ENCODE measurements at regions of chr7 and their contacts with region 1.

Region 1: DNA sequence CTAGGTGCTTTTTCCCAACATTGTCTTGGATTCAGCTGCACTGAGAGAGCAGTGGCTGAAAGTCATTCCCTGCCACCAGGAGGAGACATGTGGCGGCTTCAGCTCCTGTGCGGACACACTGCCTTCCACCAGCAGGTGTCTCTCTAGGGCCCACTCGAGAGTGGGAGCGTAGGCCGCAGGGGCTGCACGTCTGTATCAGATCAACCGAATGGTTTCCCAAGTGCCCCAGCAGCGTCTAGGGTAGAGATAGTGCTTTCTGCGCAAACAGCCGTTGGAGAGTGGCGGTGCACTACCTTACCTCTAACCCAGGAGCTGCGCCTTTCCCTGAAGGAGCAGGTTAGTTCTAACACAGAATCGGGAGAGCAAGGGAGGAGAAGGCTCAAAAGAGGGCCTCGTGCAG is 31.7 kb downstream of the PAPOLB start:
- DNase-seq: peak; percentile 82 to 89 (median 86)
- H3K4me3 ChIP-seq: no peak overlapping the region
- H3K27ac ChIP-seq: no peak overlapping the region
- H3K4me1 ChIP-seq: peaks cover 0 to 3% (median 0%) of the 10 kb centered on the region in 4 experiments
- H3K27me3 ChIP-seq: no peaks in the 10 kb centered on the region

Region 2: GRCh38 chr7:4733936-4734528 is 96.1 kb before region 1 on chr7:
- CTCF ChIA-PET with region 1: no interaction called
- POLR2A ChIA-PET with region 1: no interaction called
- DNase-seq: peak in 2 of 3 donors; percentile 83 to 84
- H3K4me3 ChIP-seq: peak overlapping the region in 3 of 7 experiments; percentile 5 to 36 (median 28)
- H3K27ac ChIP-seq: no peak overlapping the region
- H3K4me1 ChIP-seq: peaks cover 0 to 43% (median 42%) of the 10 kb centered on the region in 4 experiments
- H3K27me3 ChIP-seq: no peaks in the 10 kb centered on the region

Region 3: DNA sequence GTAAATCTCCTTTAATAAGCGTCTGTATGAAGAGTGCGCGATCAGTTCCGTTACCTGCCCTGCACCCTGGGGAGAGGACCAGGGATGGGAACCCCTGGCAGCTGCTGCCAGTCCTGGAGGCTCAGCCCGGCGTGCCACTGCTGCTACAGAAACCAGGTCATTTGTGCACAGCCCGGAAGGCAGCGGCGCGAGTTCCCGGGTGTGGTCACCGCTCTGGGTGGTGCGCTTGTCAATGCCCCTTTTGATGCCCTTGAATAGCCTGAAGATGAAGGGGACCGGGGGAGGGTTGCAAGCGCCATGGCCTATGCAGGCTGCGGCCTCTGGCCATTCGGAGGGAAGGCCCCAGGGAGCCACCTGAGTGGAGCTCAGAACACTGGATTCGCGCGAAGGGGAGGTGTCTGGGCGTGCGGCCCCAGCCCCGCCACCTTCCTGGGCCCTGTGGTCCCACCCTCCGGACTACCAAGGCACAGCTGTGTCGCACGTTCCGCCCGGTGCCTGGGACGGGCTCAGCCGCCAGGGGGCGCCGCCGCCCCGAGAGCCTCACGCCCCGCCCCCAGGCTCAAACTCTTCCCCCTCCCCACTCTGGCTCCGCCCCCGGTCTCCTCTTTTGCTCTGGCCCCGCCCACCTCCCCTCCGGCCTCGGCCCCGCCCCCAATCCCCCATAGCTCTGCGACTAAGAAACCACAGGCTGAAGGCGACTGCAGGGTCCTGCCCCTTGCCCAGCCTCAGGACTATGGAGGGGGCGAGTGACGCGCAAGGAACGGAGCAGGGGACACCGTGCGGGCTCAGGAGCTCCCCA is 38.2 kb before region 1 on chr7:
- CTCF ChIA-PET with region 1: interaction called, 29 read pairs
- POLR2A ChIA-PET with region 1: no interaction called
- DNase-seq: peak; percentile 75 to 88 (median 84)
- H3K4me3 ChIP-seq: peak overlapping the region in 6 of 7 experiments; percentile 30 to 72 (median 66)
- H3K27ac ChIP-seq: no peak overlapping the region
- H3K4me1 ChIP-seq: peaks cover 0 to 12% (median 5%) of the 10 kb centered on the region in 4 experiments
- H3K27me3 ChIP-seq: no peaks in the 10 kb centered on the region

Region 4: GRCh38 chr7:4815609-4816418 is 14.4 kb before region 1 on chr7:
- CTCF ChIA-PET with region 1: interaction called, 15 read pairs
- POLR2A ChIA-PET with region 1: no interaction called
- DNase-seq: no peak
- H3K4me3 ChIP-seq: no peak overlapping the region
- H3K27ac ChIP-seq: no peak overlapping the region
- H3K4me1 ChIP-seq: peaks cover 0 to 23% (median 12%) of the 10 kb centered on the region in 4 experiments
- H3K27me3 ChIP-seq: no peaks in the 10 kb centered on the region

Region 5: GRCh38 chr7:4856336-4857057 is 26.3 kb after region 1 on chr7:
- CTCF ChIA-PET with region 1: interaction called, 11 read pairs
- POLR2A ChIA-PET with region 1: no interaction called
- DNase-seq: no peak
- H3K4me3 ChIP-seq: no peak overlapping the region
- H3K27ac ChIP-seq: no peak overlapping the region
- H3K4me1 ChIP-seq: peaks cover 0 to 3% (median 0%) of the 10 kb centered on the region in 4 experiments
- H3K27me3 ChIP-seq: peaks cover 0 to 23% (median 6%) of the 10 kb centered on the region in 5 experiments

Region 6: GRCh38 chr7:5088906-5089305 is 258.7 kb after region 1 on chr7:
- CTCF ChIA-PET with region 1: interaction called, 11 read pairs
- POLR2A ChIA-PET with region 1: no interaction called
- DNase-seq: no peak
- H3K4me3 ChIP-seq: no peak overlapping the region
- H3K27ac ChIP-seq: no peak overlapping the region
- H3K4me1 ChIP-seq: peaks cover 0 to 3% (median 1%) of the 10 kb centered on the region in 4 experiments
- H3K27me3 ChIP-seq: peaks cover 0 to 14% (median 2%) of the 10 kb centered on the region in 5 experiments

Measured in common myeloid progenitor, CD34-positive (primary cell).